ENCODE measurements at regions of chr5 and their contacts with region 1.

Region 1: DNA sequence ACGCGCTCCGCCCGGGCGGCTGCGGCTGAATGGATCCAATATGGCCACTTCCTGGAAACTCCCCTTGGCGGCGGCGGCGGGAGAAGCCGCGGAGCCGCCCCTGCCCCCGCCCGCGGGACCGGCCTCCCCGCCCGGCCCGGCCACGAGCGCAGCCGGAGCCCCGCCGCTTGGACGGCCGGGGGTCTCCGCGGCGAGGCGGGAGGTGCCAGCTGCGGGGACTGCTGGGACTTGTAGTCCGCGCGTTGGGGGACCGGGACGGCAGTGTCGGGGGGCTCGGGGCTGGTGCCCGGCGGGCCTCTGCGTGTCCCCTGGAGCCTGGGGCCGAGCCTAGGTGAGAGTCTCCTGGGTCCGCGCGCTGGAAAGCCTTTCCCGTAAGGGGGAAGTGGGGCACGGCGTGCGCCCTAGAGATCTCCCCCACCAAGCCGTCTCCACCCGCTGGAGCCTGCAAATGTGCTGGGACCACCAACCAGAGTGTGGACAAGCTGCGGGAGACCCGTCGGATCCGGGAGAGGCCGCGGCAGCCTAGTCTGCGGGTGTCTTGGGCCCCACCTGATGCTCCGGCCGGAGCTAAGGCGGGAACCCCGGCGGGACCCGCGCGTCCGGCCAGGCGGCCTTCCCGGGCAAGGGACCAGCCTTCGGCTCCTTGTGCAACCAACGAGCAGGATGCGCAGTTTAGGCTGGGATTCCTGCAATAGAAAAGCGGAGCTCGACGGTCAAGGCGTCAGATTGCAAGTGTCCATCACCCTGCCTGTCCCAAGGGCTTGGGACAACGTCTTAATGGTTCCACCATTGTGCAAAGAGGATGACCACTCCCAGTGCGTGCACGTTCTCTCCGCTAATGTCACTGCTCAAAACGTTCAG is at the start of gene SEPTIN8:
- DNase-seq: peak; percentile 48
- ATAC-seq: peak; percentile 77
- H3K4me3 Mint-ChIP-seq: peak within 1 kb of the TSS; percentile 79
- H3K27ac Mint-ChIP-seq: no peak within 1 kb of the TSS
- H3K4me1 Mint-ChIP-seq: peaks cover 15% of the 10 kb centered on the region
- H3K27me3 Mint-ChIP-seq: peaks cover 42% of the 10 kb centered on the region
- CTCF ChIP-seq: no peak
- total RNA-seq, gene SEPTIN8: 6.5 and 7.3 TPM in 2 replicates

Region 2: GRCh38 chr5:132736853-132737833 is 40.3 kb before region 1 on chr5 and contains the start of gene KIF3A:
- CTCF ChIA-PET with region 1: no interaction called
- POLR2A ChIA-PET with region 1: interaction called, 4 read pairs
- intact Hi-C with region 1: loop called (anchors 2 kb)
- DNase-seq: peak; percentile 98
- ATAC-seq: peak; percentile 92
- H3K4me3 Mint-ChIP-seq: peak within 1 kb of the TSS; percentile 90
- H3K27ac Mint-ChIP-seq: peak within 1 kb of the TSS; percentile 87
- H3K4me1 Mint-ChIP-seq: peaks cover 18% of the 10 kb centered on the region
- H3K27me3 Mint-ChIP-seq: peaks cover 5% of the 10 kb centered on the region
- CTCF ChIP-seq: no peak
- total RNA-seq, gene KIF3A: 9.2 and 9.8 TPM in 2 replicates

Region 3: DNA sequence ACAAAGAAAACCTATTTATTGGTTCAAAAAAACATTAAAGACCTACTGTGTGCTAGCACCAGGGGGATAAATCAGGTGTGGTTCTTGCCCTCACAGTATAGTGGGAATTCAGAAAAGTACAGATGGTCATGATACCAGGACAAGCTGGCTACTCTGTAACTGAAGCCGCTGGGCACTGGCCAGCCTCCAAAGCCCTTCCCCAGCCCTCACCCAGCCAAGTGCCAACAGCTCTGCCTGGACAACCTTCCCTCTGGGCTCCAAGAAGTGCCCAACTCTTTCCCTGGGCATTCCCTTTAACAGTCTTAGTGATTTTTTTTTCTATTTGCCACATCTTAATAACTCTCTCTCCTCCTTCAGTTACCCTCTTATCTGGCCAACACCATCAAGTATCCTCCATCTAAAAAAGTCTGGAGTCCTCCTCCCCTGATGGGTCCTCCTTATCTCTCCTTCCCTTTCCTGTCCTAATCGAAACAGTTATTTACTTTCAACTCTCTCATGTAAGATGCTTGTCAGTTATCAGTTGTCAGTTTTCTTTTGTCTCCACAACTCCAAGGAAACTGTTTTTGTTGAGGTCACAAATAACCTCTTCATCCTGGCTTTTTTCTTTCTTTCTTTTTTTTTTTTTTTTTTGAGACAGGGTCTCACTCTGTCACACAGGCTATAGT is 12.9 kb after region 1 on chr5:
- CTCF ChIA-PET with region 1: no interaction called
- POLR2A ChIA-PET with region 1: no interaction called
- intact Hi-C with region 1: no loop called
- DNase-seq: no peak
- ATAC-seq: no peak
- H3K4me3 Mint-ChIP-seq: no peak overlapping the region
- H3K27ac Mint-ChIP-seq: no peak overlapping the region
- H3K4me1 Mint-ChIP-seq: no peaks in the 10 kb centered on the region
- H3K27me3 Mint-ChIP-seq: peaks cover 22% of the 10 kb centered on the region
- CTCF ChIP-seq: no peak

Region 4: GRCh38 chr5:132813599-132814502 is 36.4 kb after region 1 on chr5:
- CTCF ChIA-PET with region 1: no interaction called
- POLR2A ChIA-PET with region 1: no interaction called
- intact Hi-C with region 1: loop called (anchors 5 kb)
- DNase-seq: peak; percentile 47
- ATAC-seq: peak; percentile 63
- H3K4me3 Mint-ChIP-seq: no peak overlapping the region
- H3K27ac Mint-ChIP-seq: no peak overlapping the region
- H3K4me1 Mint-ChIP-seq: peaks cover 10% of the 10 kb centered on the region
- H3K27me3 Mint-ChIP-seq: peaks cover 32% of the 10 kb centered on the region
- CTCF ChIP-seq: no peak

Region 5: DNA sequence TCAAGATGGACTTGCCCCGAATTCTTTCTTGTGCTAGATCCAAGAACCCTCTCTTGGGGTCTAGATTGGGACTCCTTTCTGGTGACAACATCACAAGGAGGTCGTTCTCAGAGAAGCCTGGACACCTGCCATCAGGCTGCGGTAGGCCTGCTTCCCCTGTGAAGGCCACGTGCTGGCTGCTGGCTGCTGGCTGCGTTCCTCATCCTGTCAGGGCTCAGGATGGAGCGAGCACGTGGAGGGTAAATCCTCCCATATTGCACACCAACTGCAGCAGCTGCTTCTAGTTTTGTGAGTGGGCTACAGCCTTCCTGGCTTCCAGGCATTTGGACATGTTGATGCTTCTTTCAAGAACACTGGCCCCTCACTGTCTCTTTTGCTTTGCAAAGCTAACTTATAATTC is 370.0 kb after region 1 on chr5:
- CTCF ChIA-PET with region 1: no interaction called
- POLR2A ChIA-PET with region 1: no interaction called
- intact Hi-C with region 1: no loop called
- DNase-seq: no peak
- ATAC-seq: no peak
- H3K4me3 Mint-ChIP-seq: no peak overlapping the region
- H3K27ac Mint-ChIP-seq: no peak overlapping the region
- H3K4me1 Mint-ChIP-seq: no peaks in the 10 kb centered on the region
- H3K27me3 Mint-ChIP-seq: no peaks in the 10 kb centered on the region
- CTCF ChIP-seq: no peak

Region 6: DNA sequence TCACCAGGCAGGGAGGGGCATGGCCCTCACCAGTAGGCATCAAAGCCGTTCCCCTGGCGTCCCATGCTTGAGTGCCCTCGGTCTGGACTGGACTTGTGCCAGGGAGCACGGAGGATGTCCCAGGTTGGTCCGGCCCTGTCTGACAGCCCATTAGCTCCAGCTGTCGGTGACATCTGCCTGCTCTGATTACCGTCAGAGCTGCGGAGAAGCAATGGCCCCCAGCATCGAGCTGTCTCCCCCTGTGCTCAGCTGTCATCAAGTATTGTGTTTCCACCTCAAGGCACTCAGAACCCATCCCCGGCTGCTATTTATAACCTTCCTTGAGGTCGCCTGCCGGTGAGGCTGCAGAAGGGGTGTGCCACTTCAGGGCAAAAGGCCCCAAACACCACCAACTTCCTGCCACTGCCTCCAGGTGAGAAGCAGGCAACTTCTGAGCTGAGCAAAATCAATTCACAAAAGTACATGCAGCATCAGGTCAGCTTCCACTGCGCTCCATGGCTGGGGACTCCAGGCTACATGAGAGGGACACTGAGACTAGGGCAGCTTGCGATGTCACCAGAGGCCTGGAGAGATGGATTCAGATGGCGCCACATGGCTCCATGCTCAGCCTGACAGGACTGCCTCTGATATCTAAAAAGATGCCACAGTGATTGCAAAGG is 1048.3 kb after region 1 on chr5:
- CTCF ChIA-PET with region 1: no interaction called
- POLR2A ChIA-PET with region 1: no interaction called
- intact Hi-C with region 1: no loop called
- DNase-seq: no peak
- ATAC-seq: peak; percentile 67
- H3K4me3 Mint-ChIP-seq: peak overlapping the region; percentile 8
- H3K27ac Mint-ChIP-seq: peak overlapping the region; percentile 26
- H3K4me1 Mint-ChIP-seq: peaks cover 53% of the 10 kb centered on the region
- H3K27me3 Mint-ChIP-seq: no peaks in the 10 kb centered on the region
- CTCF ChIP-seq: no peak